ENCODE measurements at regions of chr6 and their contacts with region 1.

Region 1: DNA sequence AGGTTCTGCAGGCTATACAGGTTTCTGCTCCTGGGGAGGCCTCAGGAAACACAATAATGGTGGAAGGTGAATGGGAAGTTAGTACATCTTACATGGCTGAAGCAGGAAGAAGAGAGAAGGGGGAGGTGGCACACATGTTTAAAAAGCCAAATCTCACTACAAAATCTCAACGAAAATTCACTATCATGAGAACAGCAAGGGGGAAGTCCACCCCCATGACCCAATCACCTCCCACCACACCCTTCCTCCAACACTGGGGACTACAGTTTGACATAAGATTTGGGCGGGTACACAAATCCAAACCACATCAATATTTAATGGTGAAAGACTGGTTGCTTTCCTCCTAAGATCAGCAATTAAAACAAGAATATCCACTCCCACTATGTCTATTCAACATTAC is 13.8 kb upstream of the POLR1H start:
- DNase-seq: no peak
- H3K4me3 ChIP-seq: no peak overlapping the region
- CTCF ChIP-seq: no peak

Region 2: DNA sequence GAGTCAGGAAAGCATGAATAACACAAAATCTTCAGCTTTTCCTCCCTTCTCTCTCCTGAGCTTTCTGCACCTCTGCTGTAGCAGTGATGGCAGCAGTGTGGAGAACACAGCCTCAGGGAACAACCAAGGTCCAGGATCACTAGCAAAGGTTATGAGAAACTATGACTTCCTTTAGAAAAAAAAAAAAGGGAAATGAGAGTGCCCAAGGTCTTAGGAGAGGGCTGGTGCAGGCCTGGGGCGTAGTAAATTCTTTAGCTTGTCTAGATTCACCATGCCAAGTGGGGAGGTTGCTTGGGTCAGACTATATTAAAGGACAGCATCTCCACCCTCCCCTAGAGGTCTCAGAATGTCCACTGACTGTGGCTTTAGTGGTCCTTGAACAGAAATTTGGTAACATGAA is 26.6 kb before region 1 on chr6:
- CTCF ChIA-PET with region 1: no interaction called
- POLR2A ChIA-PET with region 1: no interaction called
- DNase-seq: no peak
- H3K4me3 ChIP-seq: no peak overlapping the region
- CTCF ChIP-seq: no peak

Region 3: GRCh38 chr6:30061092-30061857 is 14.1 kb after region 1 on chr6 and contains the start of gene POLR1H:
- CTCF ChIA-PET with region 1: interaction called, 8 read pairs
- POLR2A ChIA-PET with region 1: interaction called, 10 read pairs
- DNase-seq: peak; percentile 72
- H3K4me3 ChIP-seq: peak within 1 kb of the TSS; percentile 88
- CTCF ChIP-seq: no peak

Measured in AG04449 (cell line).